ENCODE measurements at regions of chr13 and their contacts with region 1.

Region 1: DNA sequence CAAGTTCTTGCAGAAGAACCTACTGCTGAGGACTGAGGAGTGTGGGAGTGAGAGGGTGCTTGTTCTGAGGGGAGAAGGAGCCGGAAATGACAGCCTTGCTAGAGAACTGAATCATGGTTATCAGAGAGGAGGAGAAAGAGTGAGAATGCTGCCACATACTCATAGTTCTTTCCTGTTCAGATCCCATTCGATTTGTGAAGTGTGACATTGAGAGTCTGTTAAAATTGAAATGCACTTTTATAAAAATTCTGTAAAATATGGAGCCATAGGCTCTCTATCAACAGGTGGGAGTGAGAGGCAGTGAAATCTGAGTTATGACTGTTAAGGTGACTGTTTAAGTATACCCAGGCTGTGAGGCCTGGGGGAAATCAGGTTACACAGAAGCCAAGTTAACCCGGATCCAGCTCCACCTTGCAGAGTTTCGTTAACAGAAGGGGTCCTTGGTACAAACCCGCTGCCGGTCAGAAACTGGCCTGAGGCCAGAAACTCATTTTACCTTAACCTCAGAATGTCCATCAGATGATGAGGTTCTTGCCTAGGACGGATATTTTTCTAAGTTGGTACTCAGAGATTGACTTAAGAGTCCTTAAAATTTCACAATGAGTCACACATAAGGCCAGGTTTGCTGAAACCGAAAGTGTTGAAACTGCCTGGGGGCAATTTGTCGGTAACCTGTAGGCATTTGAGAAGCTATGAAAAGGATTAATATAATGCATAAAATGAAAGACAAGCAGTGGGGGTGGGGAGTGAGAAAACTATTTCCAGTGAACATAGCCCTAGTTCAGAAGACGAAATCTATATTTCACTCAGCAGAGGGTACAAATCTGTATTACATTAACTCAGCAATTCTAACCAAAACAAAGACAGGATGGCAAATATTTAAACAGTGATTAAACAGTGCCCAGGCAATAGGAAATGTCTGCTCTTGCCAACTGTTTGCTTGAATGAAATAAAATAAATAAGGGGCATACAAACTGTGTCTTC is 350.5 kb downstream of the KCNRG start:
- DNase-seq: peak; percentile 75
- ATAC-seq: peak; percentile 64
- H3K4me3 Mint-ChIP-seq: peak overlapping the region; percentile 13
- H3K27ac Mint-ChIP-seq: peak overlapping the region; percentile 71
- H3K4me1 Mint-ChIP-seq: peaks cover 43% of the 10 kb centered on the region
- H3K27me3 Mint-ChIP-seq: peaks cover 32% of the 10 kb centered on the region

Region 2: DNA sequence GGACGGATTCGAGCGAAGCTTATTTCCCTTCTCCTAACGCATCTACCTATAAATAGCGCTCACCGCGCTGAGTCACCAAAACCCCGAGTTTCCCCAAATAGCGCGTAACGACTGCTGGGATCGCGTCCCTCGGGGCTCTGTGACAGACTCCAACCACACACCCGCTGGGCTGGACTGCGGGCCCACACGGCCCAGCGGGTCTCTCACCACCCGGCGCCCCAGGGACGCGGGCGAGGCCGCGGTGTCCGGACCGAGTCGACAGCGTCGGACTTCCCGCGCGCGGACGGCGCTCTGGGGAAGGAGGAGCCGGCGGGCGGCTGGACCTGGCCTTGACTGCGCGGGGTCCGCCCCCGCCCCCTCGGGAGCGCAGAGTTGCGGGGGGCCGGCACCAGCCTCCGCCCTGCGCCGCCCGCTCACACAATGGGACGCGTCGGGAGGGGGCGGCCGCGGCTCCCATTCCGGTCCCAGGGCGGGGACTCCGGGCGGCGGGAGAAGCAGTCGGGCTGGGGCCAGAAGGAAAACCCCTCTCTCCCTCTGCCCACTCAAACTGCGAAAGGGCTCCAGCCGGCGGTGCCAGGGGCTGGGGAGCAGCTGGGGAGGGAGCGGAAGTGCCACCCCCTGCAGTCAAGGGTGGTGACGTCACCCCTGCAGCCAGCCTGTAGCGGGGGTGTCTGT is 241.7 kb before region 1 on chr13:
- CTCF ChIA-PET with region 1: interaction called, 3 read pairs
- POLR2A ChIA-PET with region 1: interaction called, 4 read pairs
- intact Hi-C with region 1: loop called (anchors 2 to 5 kb)
- DNase-seq: peak; percentile 86
- ATAC-seq: peak; percentile 68
- H3K4me3 Mint-ChIP-seq: peak overlapping the region; percentile 72
- H3K27ac Mint-ChIP-seq: peak overlapping the region; percentile 89
- H3K4me1 Mint-ChIP-seq: peaks cover 49% of the 10 kb centered on the region
- H3K27me3 Mint-ChIP-seq: peaks cover 13% of the 10 kb centered on the region

Region 3: DNA sequence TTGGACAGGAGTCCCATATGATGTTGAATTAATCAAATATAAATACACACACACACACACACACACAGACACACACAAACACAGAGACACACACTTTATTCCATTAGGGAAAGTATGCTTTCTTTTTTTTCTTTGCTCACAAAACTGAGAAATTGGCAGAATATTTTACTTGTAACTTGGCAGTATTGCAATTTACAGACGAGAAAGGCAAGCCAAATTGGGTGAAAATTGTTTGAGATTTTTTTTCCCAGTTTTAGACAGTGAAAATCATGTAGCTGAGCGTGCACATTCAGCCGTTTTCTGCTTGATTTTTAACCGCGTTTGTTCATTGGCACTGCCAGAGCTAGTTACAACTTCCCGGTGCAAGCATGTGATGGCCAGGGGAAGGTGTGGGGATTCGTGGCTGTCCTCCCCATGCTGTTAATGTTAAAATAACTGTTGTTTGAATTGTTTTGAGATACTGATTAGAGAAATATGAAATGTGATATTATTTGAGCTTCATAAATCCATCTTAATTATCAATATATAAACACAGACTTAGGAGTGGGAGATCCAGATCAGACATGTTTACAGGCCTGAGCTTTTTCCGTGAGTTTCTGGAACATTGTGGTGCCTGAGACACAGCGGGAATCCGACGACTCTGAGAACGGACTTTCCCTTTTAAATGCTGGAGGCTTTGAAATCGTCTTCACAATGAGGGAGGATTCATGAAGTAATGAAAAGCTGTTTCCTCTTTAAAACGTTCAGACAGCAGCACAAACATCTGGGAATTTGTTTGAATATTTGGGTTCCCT is 224.9 kb before region 1 on chr13:
- CTCF ChIA-PET with region 1: no interaction called
- POLR2A ChIA-PET with region 1: no interaction called
- intact Hi-C with region 1: loop called in 1 of 2 experiments (anchors 5 kb)
- DNase-seq: no peak
- ATAC-seq: no peak
- H3K4me3 Mint-ChIP-seq: no peak overlapping the region
- H3K27ac Mint-ChIP-seq: no peak overlapping the region
- H3K4me1 Mint-ChIP-seq: peaks cover 10% of the 10 kb centered on the region
- H3K27me3 Mint-ChIP-seq: peaks cover 24% of the 10 kb centered on the region

Region 4: GRCh38 chr13:50222569-50223332 is 142.9 kb before region 1 on chr13:
- CTCF ChIA-PET with region 1: interaction called, 3 read pairs
- POLR2A ChIA-PET with region 1: no interaction called
- intact Hi-C with region 1: loop called (anchors 1 kb)
- DNase-seq: peak; percentile 28
- ATAC-seq: no peak
- H3K4me3 Mint-ChIP-seq: no peak overlapping the region
- H3K27ac Mint-ChIP-seq: no peak overlapping the region
- H3K4me1 Mint-ChIP-seq: peaks cover 46% of the 10 kb centered on the region
- H3K27me3 Mint-ChIP-seq: peaks cover 33% of the 10 kb centered on the region

Region 5: DNA sequence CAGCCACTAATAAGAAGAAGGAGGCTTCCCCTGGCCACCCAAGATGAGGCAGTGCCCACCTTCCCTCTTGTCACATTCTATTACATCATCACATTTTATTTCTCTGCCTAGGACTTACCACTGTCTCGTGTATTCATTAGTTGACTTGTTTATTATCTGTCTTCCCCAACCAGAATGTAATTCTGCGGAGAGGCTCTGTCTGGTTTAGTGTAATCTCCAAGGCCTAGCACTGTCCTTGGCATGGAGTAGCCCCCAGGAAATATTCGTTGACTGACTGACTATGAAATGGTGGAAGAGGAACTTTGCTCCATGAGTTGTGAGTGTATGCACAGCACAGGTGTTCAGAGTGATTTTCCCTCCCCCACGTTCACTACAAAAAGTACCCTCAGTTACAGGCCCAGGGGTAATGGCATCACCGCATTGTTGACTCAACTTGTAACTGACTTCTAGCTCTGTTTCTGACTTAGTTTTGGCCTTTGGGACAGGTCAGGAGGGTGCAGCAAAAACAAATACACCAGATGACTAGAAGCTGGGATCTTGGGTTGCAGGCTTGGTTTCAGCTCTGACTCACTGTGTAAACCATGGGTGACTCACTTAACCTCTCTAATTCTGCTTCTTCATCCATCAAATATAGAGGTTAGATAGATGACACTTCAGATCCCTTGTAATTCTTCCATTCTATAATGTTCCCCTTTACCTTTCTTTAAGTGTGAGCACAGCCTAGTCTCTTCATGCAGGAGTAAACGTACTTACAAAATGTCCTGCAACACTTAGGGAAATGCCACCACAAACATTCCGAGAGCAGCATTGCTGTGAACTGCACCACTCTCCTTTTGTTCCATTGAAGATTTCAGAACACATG is 120.8 kb before region 1 on chr13:
- CTCF ChIA-PET with region 1: interaction called, 3 read pairs
- POLR2A ChIA-PET with region 1: interaction called, 3 read pairs
- intact Hi-C with region 1: loop called (anchors 1 to 2 kb)
- DNase-seq: peak; percentile 80
- ATAC-seq: peak; percentile 97
- H3K4me3 Mint-ChIP-seq: no peak overlapping the region
- H3K27ac Mint-ChIP-seq: no peak overlapping the region
- H3K4me1 Mint-ChIP-seq: peaks cover 36% of the 10 kb centered on the region
- H3K27me3 Mint-ChIP-seq: peaks cover 25% of the 10 kb centered on the region

Region 6: DNA sequence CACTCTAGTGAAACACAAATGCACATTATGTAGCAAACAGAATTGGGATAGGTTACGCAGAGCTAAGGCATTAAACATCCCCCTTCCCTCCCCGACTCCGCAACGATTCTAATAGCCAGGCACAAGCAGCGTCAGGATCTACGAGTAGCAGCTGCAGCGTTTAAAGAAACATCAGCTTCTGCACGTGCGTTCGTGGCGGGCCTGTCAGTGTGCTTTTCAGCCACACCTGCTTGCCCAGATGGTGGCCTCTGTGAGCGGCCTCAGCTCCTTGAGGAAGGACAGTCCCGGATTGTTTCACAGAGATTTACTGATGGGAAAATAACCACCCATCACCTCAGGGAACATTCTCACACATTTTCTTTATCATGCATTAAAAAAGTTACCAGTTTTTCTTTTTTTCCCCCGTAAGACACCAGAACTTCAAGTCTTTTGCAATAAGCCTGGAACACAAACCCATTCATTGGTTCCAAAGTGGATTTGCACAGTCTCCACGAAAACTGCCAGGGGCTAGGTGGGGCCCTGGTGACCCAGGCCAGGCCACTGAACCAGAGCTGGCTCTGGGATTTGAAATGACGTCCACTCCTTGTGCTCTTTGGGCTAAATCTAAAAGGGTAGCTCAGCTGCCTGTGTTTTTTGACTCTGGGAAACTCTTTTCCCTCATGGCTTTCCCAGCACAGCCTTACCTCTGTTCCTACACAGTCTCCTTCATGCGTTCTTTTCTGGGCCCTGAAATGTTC is 25.0 kb before region 1 on chr13:
- CTCF ChIA-PET with region 1: no interaction called
- POLR2A ChIA-PET with region 1: no interaction called
- intact Hi-C with region 1: no loop called
- DNase-seq: no peak
- ATAC-seq: no peak
- H3K4me3 Mint-ChIP-seq: no peak overlapping the region
- H3K27ac Mint-ChIP-seq: no peak overlapping the region
- H3K4me1 Mint-ChIP-seq: no peaks in the 10 kb centered on the region
- H3K27me3 Mint-ChIP-seq: no peaks in the 10 kb centered on the region

Region 7: DNA sequence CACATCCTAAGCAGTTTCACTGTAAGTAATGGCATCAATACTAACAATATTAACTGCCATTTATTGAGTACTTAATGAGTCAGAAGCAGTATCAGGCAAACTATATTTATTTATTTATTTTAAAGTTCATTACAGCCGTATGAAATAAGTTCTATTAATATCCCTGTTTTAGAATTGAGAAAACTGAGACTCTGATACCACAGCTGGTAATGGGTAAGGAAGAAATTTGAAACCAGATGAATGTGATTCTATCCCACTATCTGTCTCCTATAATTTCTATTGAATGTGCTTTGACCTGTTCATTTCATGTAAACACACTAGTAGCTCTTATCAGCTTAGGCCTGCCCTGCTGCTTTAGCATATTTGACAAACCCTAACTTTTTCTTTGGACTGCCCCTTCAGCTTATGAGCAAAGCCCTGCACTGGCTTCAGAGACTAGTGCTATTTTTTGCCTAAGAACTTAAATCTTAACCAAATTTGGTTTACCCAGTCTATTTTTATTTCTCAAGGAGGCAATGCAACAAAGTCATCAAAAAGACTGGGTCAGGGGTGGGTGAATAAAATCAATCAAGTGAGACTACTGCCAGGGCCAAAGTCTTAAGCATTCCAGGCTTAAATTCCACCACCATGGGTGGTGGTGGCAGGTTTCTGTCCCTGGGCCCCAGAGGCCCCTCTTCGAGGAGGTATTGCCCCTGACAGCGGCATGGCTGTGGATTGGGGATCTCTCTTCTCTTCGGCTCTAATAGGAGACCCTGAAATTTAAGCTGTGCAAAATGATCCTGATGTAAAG is 334.4 kb after region 1 on chr13:
- CTCF ChIA-PET with region 1: no interaction called
- POLR2A ChIA-PET with region 1: no interaction called
- intact Hi-C with region 1: no loop called
- DNase-seq: no peak
- ATAC-seq: no peak
- H3K4me3 Mint-ChIP-seq: no peak overlapping the region
- H3K27ac Mint-ChIP-seq: no peak overlapping the region
- H3K4me1 Mint-ChIP-seq: no peaks in the 10 kb centered on the region
- H3K27me3 Mint-ChIP-seq: no peaks in the 10 kb centered on the region

Measured in activated CD4-positive, alpha-beta T cell treated with anti-CD3 and anti-CD28 coated beads for 36 hours (primary cell).